Right cardiac atrium (tissue), 5 donors: ENCODE measurements at regions of chr6 and their contacts with region 1.

Region 1: DNA sequence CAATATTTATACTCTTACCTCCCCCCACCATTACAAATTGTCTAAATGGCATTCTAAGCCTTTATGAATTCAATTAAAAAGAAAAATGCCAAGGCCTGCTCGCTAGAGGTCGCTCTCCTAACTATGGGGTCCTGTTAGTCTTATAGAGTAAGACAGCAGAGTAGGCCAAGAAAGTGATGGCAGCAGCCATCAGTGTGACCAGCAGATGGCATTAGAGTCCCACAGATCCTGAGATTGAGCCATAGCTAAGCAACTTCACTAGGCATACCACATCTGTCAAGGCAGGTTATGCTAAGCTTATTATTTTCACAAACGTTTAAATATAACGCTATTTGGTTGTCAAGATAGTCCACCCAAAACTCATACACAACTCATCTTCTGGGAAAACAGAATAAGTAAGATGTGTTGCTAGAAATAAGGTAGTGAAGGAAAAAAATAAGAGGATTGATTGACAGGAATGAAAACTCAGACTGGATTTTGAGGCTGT is 57.6 kb upstream of the SCAF8 start:
- DNase-seq: peak; percentile 83 to 93 (median 87)
- ATAC-seq: peak; percentile 97 to 98
- H3K4me3 ChIP-seq: no peak overlapping the region
- H3K27ac ChIP-seq: no peak overlapping the region
- H3K4me1 ChIP-seq: no peaks in the 10 kb centered on the region
- H3K27me3 ChIP-seq: no peaks in the 10 kb centered on the region

Region 2: DNA sequence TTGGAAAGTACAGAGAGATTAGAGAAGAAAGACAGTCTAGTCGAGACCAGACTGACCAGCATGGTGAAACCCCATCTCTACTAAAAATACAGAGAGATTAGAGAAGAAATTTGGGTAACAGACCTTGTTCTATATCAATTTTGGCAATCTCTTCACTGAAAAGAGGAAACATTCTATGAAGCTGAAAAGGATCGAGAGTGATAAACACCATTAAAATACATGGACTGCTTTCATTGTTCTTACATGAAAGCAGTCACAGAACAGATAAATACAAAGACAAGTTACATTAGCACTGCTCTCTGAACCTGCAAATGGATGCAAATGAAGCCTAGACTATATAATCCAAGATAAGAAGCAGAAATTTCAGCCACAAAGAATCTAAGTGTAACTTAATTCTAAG is 645.0 kb before region 1 on chr6:
- intact Hi-C with region 1: no loop called
- DNase-seq: no peak
- ATAC-seq: no peak
- H3K4me3 ChIP-seq: no peak overlapping the region
- H3K27ac ChIP-seq: no peak overlapping the region
- H3K4me1 ChIP-seq: no peaks in the 10 kb centered on the region
- H3K27me3 ChIP-seq: no peaks in the 10 kb centered on the region

Region 3: GRCh38 chr6:154800338-154800737 is 124.7 kb after region 1 on chr6:
- intact Hi-C with region 1: loop called (anchors 5 kb)
- DNase-seq: no peak
- ATAC-seq: no peak
- H3K4me3 ChIP-seq: no peak overlapping the region
- H3K27ac ChIP-seq: no peak overlapping the region
- H3K4me1 ChIP-seq: no peaks in the 10 kb centered on the region
- H3K27me3 ChIP-seq: no peaks in the 10 kb centered on the region